Heart left ventricle (tissue), 16 donors: ENCODE measurements at regions of chr11 and their contacts with region 1.

Region 1: DNA sequence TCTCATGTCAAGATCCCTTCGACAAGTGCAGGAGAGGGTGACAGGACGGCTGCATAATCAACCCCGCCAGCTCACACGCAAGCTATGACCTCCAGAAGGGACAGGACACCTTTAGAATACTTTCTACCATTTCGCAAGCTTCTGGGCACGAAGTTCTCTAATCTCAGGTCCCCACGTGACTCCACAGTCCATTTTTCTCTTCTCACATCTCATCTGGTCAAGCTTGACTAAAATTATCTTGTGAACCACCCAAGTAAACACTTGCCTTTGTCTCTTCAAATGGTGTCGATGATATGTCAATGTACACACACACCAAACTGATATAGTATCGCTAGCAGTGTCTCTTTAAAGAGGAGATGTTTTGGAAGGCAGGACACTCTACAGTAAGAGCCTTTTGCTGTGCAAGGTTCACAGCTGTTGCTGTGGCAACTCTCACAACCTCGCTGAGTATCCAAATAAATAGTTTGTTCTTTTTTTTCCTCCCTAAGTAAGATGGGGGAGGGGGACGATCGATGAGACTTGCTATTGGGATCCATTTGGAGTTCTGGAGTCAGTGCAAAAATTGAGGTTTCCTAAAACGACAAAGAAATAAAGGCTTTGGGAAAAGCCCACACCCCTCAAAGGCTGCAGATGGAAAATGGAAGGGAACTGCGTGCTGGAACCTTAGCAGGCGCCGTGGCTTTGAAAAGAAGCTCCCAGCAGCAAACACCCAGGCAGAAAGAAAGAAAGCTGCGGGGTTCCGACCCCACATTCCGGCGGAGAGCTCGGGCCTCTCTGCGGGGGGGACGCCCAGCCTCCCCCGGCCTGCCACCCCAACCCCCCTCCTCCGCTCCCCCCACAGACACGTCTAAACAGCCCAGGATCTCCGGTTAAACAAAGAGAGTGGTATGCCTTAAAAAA is 215.4 kb upstream of the UBASH3B start:
- DNase-seq: peak in 4 of 5 donors; percentile 17 to 75 (median 40)
- ATAC-seq: peak; percentile 66 to 91 (median 84)
- H3K4me3 ChIP-seq: peak overlapping the region; percentile 14 to 75 (median 58)
- H3K27ac ChIP-seq: peak overlapping the region; percentile 40 to 83 (median 66)
- H3K4me1 ChIP-seq: peaks cover 0 to 27% (median 5%) of the 10 kb centered on the region in 12 donors
- H3K27me3 ChIP-seq: no peaks in the 10 kb centered on the region
- CTCF ChIP-seq: no peak
- POLR2A ChIP-seq: no peak

Region 2: GRCh38 chr11:122309262-122309925 is 130.8 kb before region 1 on chr11:
- intact Hi-C with region 1: loop called in 2 of 10 experiments (anchors 2 to 10 kb)
- DNase-seq: peak in 3 of 5 donors; percentile 23 to 35 (median 33)
- ATAC-seq: peak; percentile 82 to 96 (median 90)
- H3K4me3 ChIP-seq: peak overlapping the region; percentile 0 to 57 (median 46)
- H3K27ac ChIP-seq: peak overlapping the region in 11 of 12 donors; percentile 3 to 90 (median 62)
- H3K4me1 ChIP-seq: peaks cover 0 to 33% (median 3%) of the 10 kb centered on the region in 12 donors
- H3K27me3 ChIP-seq: no peaks in the 10 kb centered on the region
- CTCF ChIP-seq: no peak
- POLR2A ChIP-seq: peak in 1 of 2 donors; percentile 34

Region 3: GRCh38 chr11:122345586-122345985 is 94.6 kb before region 1 on chr11:
- intact Hi-C with region 1: loop called in 1 of 10 experiments (anchors 2 kb)
- DNase-seq: no peak
- ATAC-seq: no peak
- H3K4me3 ChIP-seq: no peak overlapping the region
- H3K27ac ChIP-seq: no peak overlapping the region
- H3K4me1 ChIP-seq: peaks cover 0 to 54% (median 8%) of the 10 kb centered on the region in 12 donors
- H3K27me3 ChIP-seq: no peaks in the 10 kb centered on the region
- CTCF ChIP-seq: no peak
- POLR2A ChIP-seq: no peak

Region 4: DNA sequence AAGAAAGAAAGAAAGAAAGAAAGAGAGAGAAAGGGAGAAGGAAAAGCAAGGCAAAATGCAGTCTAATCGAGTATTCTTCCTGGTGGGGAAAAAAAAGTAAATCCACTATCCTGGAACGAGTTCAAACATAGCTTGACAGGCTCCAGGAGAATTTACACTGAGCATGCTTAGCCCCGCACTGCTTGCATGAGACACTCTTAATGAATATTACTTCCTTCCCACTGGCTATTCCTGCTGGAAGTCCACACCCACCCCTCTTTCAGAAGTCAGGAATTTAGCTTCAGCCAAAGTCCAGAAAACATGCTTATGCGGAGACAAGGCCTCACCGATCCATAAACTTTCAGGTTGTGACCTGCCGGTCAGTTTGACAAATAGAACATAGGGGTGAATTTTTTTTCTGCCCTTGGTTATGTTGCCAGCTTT is 72.3 kb before region 1 on chr11:
- intact Hi-C with region 1: loop called in 1 of 10 experiments (anchors 10 kb)
- DNase-seq: peak in 4 of 5 donors; percentile 32 to 48 (median 40)
- ATAC-seq: peak; percentile 71 to 95 (median 84)
- H3K4me3 ChIP-seq: peak overlapping the region in 5 of 12 donors; percentile 2 to 49 (median 23)
- H3K27ac ChIP-seq: peak overlapping the region in 7 of 12 donors; percentile 13 to 74 (median 54)
- H3K4me1 ChIP-seq: peaks cover 0 to 34% (median 13%) of the 10 kb centered on the region in 12 donors
- H3K27me3 ChIP-seq: no peaks in the 10 kb centered on the region
- CTCF ChIP-seq: no peak
- POLR2A ChIP-seq: no peak

Region 5: DNA sequence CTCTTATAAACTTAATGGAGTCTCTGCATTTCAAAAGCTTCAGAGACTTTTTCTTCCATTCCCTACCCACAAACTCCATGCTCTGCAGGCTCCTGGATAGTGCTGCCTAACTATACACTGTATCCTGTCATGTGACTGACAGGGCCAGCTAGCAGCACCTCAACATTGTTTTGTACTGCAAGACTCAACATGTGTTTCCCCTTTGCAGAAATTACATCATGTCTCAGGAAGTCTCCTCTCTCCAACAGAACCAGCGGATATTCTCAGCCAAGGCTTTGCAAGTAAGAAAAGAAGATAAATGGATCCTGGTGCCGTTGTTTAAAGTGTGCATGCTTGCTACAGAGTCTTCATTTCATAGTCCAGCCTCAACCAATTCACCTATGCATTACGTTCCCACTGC is 51.3 kb after region 1 on chr11:
- intact Hi-C with region 1: loop called in 2 of 10 experiments (anchors 5 to 10 kb)
- DNase-seq: peak in 2 of 5 donors; percentile 34 to 37
- ATAC-seq: peak; percentile 69 to 96 (median 84)
- H3K4me3 ChIP-seq: no peak overlapping the region
- H3K27ac ChIP-seq: peak overlapping the region in 9 of 12 donors; percentile 9 to 60 (median 48)
- H3K4me1 ChIP-seq: peaks cover 0 to 22% (median 12%) of the 10 kb centered on the region in 12 donors
- H3K27me3 ChIP-seq: no peaks in the 10 kb centered on the region
- CTCF ChIP-seq: no peak
- POLR2A ChIP-seq: no peak

Region 6: GRCh38 chr11:123381817-123382554 is 941.8 kb after region 1 on chr11:
- intact Hi-C with region 1: no loop called
- DNase-seq: no peak
- ATAC-seq: no peak
- H3K4me3 ChIP-seq: no peak overlapping the region
- H3K27ac ChIP-seq: peak overlapping the region in 1 of 12 donors; percentile 18
- H3K4me1 ChIP-seq: peaks cover 0 to 37% (median 9%) of the 10 kb centered on the region in 12 donors
- H3K27me3 ChIP-seq: no peaks in the 10 kb centered on the region
- CTCF ChIP-seq: no peak
- POLR2A ChIP-seq: no peak